Tibial artery (tissue), 4 donors: ENCODE measurements at regions of chr2 and their contacts with region 1.

Region 1: DNA sequence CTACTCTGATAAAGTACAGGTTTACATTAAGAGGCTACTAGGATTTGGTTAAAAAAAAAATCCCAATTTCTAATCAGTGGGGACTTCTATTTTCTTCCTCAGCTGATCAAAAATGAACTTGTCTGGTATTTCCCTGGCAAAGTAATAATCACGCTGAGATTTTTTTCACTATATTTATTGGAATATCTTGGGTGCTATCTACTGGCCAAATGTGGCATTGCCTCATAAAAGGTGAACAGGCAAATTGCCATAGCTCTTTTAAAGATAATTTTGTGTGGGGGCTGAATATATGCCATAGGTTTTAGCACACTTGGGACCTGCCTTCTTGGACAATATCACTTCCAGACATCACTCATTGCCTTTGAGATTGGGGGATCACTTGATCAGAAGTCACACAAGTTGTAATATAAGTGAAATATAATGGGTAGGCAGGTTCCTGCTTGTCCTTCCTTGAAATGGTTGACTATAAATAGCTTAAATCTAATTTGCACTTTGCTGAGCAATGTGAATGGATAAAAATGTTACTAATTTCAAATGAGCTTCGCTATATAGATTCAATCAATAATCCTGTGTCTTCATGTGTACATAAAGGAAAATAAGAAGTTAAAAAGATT is 7.0 kb upstream of the NXPH2 start:
- DNase-seq: no peak
- H3K4me3 ChIP-seq: no peak overlapping the region
- H3K27ac ChIP-seq: no peak overlapping the region
- H3K4me1 ChIP-seq: no peaks in the 10 kb centered on the region
- H3K27me3 ChIP-seq: no peaks in the 10 kb centered on the region
- CTCF ChIP-seq: peak; percentile 70 to 80

Region 2: DNA sequence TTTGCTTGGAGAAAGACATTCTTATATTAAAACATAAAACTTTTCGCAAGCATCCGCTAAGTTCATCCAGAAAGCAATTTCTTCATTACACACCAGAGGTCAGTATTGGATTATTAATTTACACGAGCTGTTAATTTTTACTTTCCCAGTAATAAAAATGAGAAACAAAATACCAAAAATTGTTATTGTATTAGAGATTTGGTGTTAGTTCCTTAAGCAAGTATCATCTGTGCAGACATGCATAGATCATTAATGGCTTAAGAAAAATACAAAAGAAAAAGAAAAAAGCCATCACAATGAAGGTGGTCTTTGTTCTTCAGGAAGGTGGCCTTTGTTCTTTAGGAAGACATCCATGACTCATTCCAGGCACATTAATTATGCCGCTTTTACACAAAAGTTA is 876.5 kb before region 1 on chr2:
- intact Hi-C with region 1: loop called (anchors 2 kb)
- DNase-seq: no peak
- H3K4me3 ChIP-seq: no peak overlapping the region
- H3K27ac ChIP-seq: no peak overlapping the region
- H3K4me1 ChIP-seq: no peaks in the 10 kb centered on the region
- H3K27me3 ChIP-seq: no peaks in the 10 kb centered on the region
- CTCF ChIP-seq: peak; percentile 62 to 70

Region 3: DNA sequence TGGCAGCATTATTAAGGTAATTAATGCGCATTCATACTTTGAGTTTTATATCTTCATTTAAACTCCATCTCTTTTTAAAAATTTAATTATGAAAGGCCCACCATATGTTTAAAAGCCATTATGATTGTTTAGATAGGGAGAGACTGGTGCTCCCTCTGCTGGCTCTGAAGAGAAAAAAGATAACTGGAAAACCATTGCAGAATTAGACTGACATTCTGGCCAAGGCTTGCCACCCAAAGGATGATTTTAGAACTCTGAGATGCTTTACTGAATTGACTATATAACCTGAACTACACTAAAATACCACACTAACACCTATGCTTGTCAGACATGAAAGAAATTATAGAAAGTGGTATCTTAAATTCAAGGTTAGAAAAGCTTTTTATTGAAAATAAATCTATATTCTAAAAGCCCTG is 413.2 kb before region 1 on chr2:
- intact Hi-C with region 1: loop called (anchors 5 kb)
- DNase-seq: no peak
- H3K4me3 ChIP-seq: no peak overlapping the region
- H3K27ac ChIP-seq: no peak overlapping the region
- H3K4me1 ChIP-seq: peaks cover 0 to 38% (median 0%) of the 10 kb centered on the region in 4 donors
- H3K27me3 ChIP-seq: no peaks in the 10 kb centered on the region
- CTCF ChIP-seq: peak; percentile 71 to 73